ENCODE measurements at regions of chr7 and their contacts with region 1.

Region 1: GRCh38 chr7:106542550-106543220 is 118.3 kb downstream of the CCDC71L start:
- DNase-seq: peak in 2 of 3 donors; percentile 24 to 89
- ATAC-seq: peak; percentile 95
- H3K4me3 ChIP-seq: no peak overlapping the region
- H3K4me1 ChIP-seq: no peaks in the 10 kb centered on the region
- CTCF ChIP-seq: peak; percentile 19

Region 2: GRCh38 chr7:106659963-106660861 is 117.5 kb after region 1 on chr7:
- intact Hi-C with region 1: loop called in 1 of 2 experiments (anchors 10 kb)
- DNase-seq: peak; percentile 90 to 91 (median 91)
- ATAC-seq: peak; percentile 88
- H3K4me3 ChIP-seq: peak overlapping the region; percentile 78
- H3K4me1 ChIP-seq: peaks cover 12% of the 10 kb centered on the region
- CTCF ChIP-seq: peak; percentile 85

Region 3: GRCh38 chr7:106736508-106737201 is 194.0 kb after region 1 on chr7:
- intact Hi-C with region 1: loop called in 1 of 2 experiments (anchors 2 kb)
- DNase-seq: peak in 1 of 3 donors; percentile 71
- ATAC-seq: peak; percentile 94
- H3K4me3 ChIP-seq: no peak overlapping the region
- H3K4me1 ChIP-seq: peaks cover 2% of the 10 kb centered on the region
- CTCF ChIP-seq: peak; percentile 59